ENCODE measurements at regions of chr6 and their contacts with region 1.

Region 1: DNA sequence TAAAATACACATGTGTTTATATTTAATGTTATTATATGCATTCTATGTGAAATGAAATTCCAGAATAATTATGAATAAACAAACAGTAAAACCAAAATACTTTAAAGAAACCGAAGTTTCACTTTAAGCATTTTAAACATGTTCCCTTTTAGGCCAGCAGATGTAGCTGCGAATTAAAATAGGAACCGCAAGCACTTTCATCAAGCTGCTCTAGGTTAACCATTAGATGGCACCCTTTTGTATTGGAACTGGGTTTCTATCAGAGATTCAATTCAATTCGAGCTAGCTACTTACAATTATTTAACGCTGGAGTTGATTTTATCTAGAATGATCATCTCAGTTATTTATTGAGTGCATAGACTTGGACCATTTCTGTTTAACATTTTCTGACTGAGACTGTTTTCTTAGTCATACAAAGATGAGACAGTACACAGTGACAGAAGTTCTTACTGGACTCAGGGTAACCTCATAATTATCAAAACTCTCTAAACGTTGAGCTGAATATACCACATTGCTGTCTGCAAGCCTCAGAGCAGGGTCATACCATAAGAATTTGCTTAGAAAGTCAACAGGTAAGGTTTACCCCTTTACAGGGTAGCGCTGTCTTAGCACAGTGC is 8.5 kb downstream of the TMEM242 start:
- DNase-seq: peak; percentile 25
- ATAC-seq: peak; percentile 84
- H3K4me3 Mint-ChIP-seq: no peak overlapping the region
- H3K27ac Mint-ChIP-seq: no peak overlapping the region
- H3K4me1 Mint-ChIP-seq: peaks cover 13% of the 10 kb centered on the region
- H3K27me3 Mint-ChIP-seq: no peaks in the 10 kb centered on the region

Region 2: DNA sequence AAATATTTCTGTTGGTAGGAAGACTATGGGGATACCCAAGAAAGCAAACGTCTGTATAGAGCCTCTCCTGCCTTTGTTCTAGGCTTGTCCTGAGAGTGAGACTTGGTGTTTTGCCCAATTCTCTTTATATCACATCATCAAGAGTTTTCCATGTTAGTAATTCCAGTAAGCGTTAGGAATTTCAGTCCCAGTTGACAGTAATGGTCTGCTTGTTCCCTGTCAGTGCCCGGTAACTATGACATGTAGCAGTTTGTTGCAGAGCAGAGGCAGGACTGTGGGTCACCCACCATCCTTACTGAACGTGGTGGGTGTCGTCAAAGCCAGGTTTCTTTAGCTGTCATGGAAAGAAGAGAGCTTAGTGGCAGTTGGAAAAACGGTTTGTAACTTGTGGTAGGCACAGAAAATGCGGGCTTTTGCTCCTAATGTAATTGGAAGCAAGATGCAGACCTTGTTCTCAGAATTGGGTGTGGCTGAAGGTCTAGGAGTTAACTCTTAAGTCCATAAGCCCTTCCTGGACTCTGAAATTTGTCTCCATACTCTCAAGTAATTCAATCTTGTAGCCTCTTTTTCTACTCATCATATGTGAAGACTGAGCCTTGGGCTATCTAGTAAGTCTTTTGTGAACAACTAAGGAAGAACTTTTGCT is 180.3 kb before region 1 on chr6:
- CTCF ChIA-PET with region 1: no interaction called
- POLR2A ChIA-PET with region 1: no interaction called
- intact Hi-C with region 1: no loop called
- DNase-seq: no peak
- ATAC-seq: no peak
- H3K4me3 Mint-ChIP-seq: no peak overlapping the region
- H3K27ac Mint-ChIP-seq: no peak overlapping the region
- H3K4me1 Mint-ChIP-seq: peaks cover 12% of the 10 kb centered on the region
- H3K27me3 Mint-ChIP-seq: no peaks in the 10 kb centered on the region

Region 3: DNA sequence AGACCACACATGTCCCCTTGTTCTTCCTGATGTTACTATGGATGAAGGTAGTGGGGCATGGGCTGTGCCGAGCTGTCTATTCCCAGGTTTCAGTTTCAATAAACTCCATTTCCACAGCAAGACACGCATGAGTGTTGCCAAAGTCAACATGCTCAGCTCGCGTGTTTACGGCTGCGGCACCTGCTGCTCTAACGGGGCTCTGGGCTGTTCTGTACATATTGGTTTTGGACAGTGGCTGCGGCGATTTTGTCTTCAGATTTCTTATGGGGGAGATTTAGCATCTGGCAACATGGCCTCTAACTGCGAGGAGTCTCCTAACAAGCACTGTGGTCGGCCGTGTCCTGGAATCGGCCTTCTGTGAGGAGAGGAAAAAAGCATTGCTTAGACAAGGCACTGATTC is 50.1 kb before region 1 on chr6:
- CTCF ChIA-PET with region 1: no interaction called
- POLR2A ChIA-PET with region 1: no interaction called
- intact Hi-C with region 1: no loop called
- DNase-seq: no peak
- ATAC-seq: no peak
- H3K4me3 Mint-ChIP-seq: no peak overlapping the region
- H3K27ac Mint-ChIP-seq: no peak overlapping the region
- H3K4me1 Mint-ChIP-seq: no peaks in the 10 kb centered on the region
- H3K27me3 Mint-ChIP-seq: no peaks in the 10 kb centered on the region

Region 4: DNA sequence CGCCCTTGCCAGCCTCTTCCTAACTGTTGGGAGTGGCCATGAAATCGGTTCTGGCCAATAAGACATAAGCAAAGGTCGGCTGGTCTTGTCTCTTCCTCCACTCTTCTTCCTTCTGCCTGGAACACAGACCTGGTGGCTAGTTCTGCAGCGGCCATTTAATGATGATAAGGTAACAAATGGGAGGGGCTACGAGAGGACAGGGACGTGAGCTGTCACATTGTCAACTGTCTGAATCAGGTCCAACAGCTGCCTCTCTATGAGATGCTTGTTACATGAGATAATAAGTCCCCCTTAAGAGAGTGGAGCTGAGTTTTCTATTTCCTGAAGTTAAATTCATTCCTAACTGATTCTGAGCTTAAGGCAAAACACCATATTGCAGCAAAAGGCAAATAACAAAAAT is 21.0 kb after region 1 on chr6:
- CTCF ChIA-PET with region 1: interaction called, 11 read pairs
- POLR2A ChIA-PET with region 1: no interaction called
- intact Hi-C with region 1: loop called (anchors 1 to 2 kb)
- DNase-seq: no peak
- ATAC-seq: no peak
- H3K4me3 Mint-ChIP-seq: no peak overlapping the region
- H3K27ac Mint-ChIP-seq: no peak overlapping the region
- H3K4me1 Mint-ChIP-seq: no peaks in the 10 kb centered on the region
- H3K27me3 Mint-ChIP-seq: peaks cover 28% of the 10 kb centered on the region

Region 5: GRCh38 chr6:157535339-157536222 is 220.8 kb after region 1 on chr6:
- CTCF ChIA-PET with region 1: no interaction called
- POLR2A ChIA-PET with region 1: interaction called, 3 read pairs
- intact Hi-C with region 1: loop called in 1 of 2 experiments (anchors 1 kb)
- DNase-seq: peak; percentile 49
- ATAC-seq: peak; percentile 88
- H3K4me3 Mint-ChIP-seq: peak overlapping the region; percentile 47
- H3K27ac Mint-ChIP-seq: peak overlapping the region; percentile 88
- H3K4me1 Mint-ChIP-seq: peaks cover 35% of the 10 kb centered on the region
- H3K27me3 Mint-ChIP-seq: peaks cover 9% of the 10 kb centered on the region

Region 6: GRCh38 chr6:157667211-157668008 is 352.6 kb after region 1 on chr6:
- CTCF ChIA-PET with region 1: interaction called, 16 read pairs
- POLR2A ChIA-PET with region 1: no interaction called
- intact Hi-C with region 1: loop called (anchors 1 kb)
- DNase-seq: peak; percentile 73
- ATAC-seq: peak; percentile 48
- H3K4me3 Mint-ChIP-seq: no peak overlapping the region
- H3K27ac Mint-ChIP-seq: no peak overlapping the region
- H3K4me1 Mint-ChIP-seq: peaks cover 31% of the 10 kb centered on the region
- H3K27me3 Mint-ChIP-seq: peaks cover 5% of the 10 kb centered on the region

Region 7: GRCh38 chr6:158072083-158072721 is 757.4 kb after region 1 on chr6:
- CTCF ChIA-PET with region 1: no interaction called
- POLR2A ChIA-PET with region 1: no interaction called
- intact Hi-C with region 1: loop called in 1 of 2 experiments (anchors 5 kb)
- DNase-seq: peak; percentile 85
- ATAC-seq: peak; percentile 76
- H3K4me3 Mint-ChIP-seq: no peak overlapping the region
- H3K27ac Mint-ChIP-seq: no peak overlapping the region
- H3K4me1 Mint-ChIP-seq: peaks cover 27% of the 10 kb centered on the region
- H3K27me3 Mint-ChIP-seq: no peaks in the 10 kb centered on the region